ENCODE measurements at regions of chr6 and their contacts with region 1.

Region 1: DNA sequence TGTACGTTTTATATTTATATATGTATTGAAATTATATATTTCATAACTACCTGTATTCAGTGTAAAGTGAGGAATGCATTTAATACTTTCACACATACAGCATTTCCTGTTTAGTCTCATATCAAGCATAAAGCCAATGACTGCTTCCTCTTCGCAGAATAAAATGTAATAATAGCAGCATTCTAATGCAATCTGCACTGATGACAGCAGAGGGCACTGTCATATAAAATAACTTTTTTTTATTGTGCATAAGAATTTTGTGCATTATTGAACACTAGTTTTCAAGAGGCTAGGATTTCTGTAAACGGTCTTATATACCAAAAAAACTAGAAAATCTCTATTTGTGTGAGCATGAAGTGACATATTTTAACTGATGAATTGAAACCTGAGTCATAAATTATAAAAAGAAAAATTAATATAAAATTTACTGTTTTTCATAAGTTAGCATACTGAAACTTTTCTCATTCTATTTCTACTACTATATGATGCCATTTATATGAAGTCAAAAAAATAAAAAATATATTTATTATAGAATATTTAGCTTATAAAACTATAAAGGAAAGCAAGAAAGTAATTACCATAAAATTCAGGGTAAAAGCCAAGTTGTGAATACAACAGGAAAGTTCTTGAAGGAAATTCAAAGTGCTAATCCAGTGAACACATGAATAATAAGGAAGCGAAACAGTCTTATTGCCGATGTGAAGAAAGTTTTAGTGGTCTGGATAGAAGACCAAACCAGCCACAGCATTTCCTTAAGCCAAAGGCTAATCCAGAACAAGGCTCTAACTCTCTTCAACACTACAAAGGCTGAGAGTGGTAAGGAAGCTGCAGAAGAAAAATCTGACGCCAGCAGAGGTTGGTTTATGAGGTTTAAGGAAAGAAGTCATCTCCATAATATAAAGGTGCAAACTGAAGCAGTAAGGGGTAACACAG is 36.3 kb downstream of the RNF146 start:
- DNase-seq: peak; percentile 31
- H3K4me3 ChIP-seq: no peak overlapping the region
- H3K27ac ChIP-seq: no peak overlapping the region
- H3K4me1 ChIP-seq: no peaks in the 10 kb centered on the region
- H3K27me3 ChIP-seq: no peaks in the 10 kb centered on the region
- CTCF ChIP-seq: peak; percentile 25 to 82 (median 68)
- POLR2A ChIP-seq: no peak

Region 2: GRCh38 chr6:127420556-127420955 is 117.6 kb after region 1 on chr6:
- intact Hi-C with region 1: loop called (anchors 5 kb)
- DNase-seq: peak; percentile 49
- H3K4me3 ChIP-seq: no peak overlapping the region
- H3K27ac ChIP-seq: no peak overlapping the region
- H3K4me1 ChIP-seq: no peaks in the 10 kb centered on the region
- H3K27me3 ChIP-seq: no peaks in the 10 kb centered on the region
- CTCF ChIP-seq: peak in 3 of 4 experiments; percentile 35 to 55 (median 44)
- POLR2A ChIP-seq: no peak

Region 3: GRCh38 chr6:127539272-127539671 is 236.3 kb after region 1 on chr6:
- intact Hi-C with region 1: loop called (anchors 2 kb)
- DNase-seq: no peak
- H3K4me3 ChIP-seq: no peak overlapping the region
- H3K27ac ChIP-seq: no peak overlapping the region
- H3K4me1 ChIP-seq: no peaks in the 10 kb centered on the region
- H3K27me3 ChIP-seq: no peaks in the 10 kb centered on the region
- CTCF ChIP-seq: peak in 3 of 4 experiments; percentile 38 to 51 (median 46)
- POLR2A ChIP-seq: no peak

Region 4: DNA sequence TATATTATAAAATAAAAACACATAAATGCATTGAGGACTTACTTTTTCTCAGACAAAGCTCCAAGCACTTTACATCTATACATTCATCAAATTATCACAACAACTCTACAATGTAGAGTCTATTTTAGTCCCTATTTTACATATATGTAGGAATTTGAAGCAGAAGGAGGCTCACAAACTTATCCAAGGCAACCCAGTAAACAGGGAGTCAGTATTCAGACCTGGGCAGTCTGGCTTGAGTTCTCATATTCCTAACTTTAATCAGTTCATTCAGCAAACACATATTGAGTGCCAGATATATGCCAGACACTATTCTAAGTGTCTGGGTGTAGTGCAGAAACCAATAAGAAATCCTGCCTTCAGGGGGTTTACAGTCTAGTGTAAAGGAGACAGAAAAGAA is 403.2 kb after region 1 on chr6:
- intact Hi-C with region 1: loop called (anchors 10 kb)
- DNase-seq: no peak
- H3K4me3 ChIP-seq: no peak overlapping the region
- H3K27ac ChIP-seq: no peak overlapping the region
- H3K4me1 ChIP-seq: no peaks in the 10 kb centered on the region
- H3K27me3 ChIP-seq: no peaks in the 10 kb centered on the region
- CTCF ChIP-seq: no peak
- POLR2A ChIP-seq: no peak

Measured in prostate gland (tissue), 2 donors.